Sigmoid colon (tissue), 7 donors: ENCODE measurements at regions of chr16 and their contacts with region 1.

Region 1: GRCh38 chr16:67514382-67514828 is 14.2 kb upstream of the RIPOR1 start:
- DNase-seq: peak; percentile 90
- H3K4me3 ChIP-seq: no peak overlapping the region
- H3K27ac ChIP-seq: no peak overlapping the region
- H3K4me1 ChIP-seq: peaks cover 0 to 13% (median 8%) of the 10 kb centered on the region in 4 donors
- H3K27me3 ChIP-seq: no peaks in the 10 kb centered on the region
- CTCF ChIP-seq: peak; percentile 15 to 68 (median 30)
- EP300 ChIP-seq: no peak
- POLR2A ChIP-seq: no peak

Region 2: GRCh38 chr16:67116388-67117311 is 397.8 kb before region 1 on chr16:
- intact Hi-C with region 1: no loop called
- DNase-seq: peak; percentile 10
- H3K4me3 ChIP-seq: no peak overlapping the region
- H3K27ac ChIP-seq: no peak overlapping the region
- H3K4me1 ChIP-seq: peaks cover 0 to 2% (median under 1%) of the 10 kb centered on the region in 4 donors
- H3K27me3 ChIP-seq: no peaks in the 10 kb centered on the region
- CTCF ChIP-seq: no peak
- EP300 ChIP-seq: no peak
- POLR2A ChIP-seq: no peak

Region 3: DNA sequence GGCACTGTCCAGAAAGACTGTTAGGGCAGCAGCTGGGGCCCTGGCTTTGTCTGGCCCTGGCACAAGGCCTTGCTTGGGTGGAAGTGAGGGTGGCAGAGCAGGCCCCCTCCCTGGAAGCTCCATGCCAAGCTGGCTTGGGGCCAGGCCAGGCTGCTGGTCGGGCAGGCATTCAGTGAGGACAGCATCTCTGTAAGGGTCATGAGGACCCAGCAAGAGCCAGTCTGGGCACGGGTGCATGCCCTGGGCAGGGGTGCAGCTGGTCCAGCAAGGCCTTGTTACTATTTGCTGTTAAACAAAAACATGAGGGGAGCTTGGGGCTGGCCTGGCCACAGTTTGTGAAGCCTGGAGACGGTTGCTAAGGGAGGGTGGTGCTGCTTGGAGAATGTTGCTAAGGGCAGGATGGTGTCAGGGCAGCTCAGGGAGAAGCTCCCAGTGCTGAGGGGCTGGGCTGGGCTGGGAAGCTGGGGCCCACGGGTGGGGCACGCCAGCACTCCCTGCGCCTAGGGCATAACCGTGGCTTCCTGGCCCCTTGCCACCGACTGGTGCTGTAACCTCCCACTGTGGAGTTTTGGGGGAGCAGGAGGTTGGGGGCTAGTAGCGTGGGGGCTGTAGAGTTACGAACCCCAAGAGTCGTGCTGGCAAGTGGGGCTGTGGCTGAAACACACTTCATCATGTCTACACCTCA is 122.9 kb before region 1 on chr16:
- intact Hi-C with region 1: no loop called
- DNase-seq: peak; percentile 78
- H3K4me3 ChIP-seq: peak overlapping the region in 1 of 4 donors; percentile 50
- H3K27ac ChIP-seq: peak overlapping the region; percentile 20 to 82 (median 63)
- H3K4me1 ChIP-seq: peaks cover 0 to 56% (median 50%) of the 10 kb centered on the region in 4 donors
- H3K27me3 ChIP-seq: peaks cover 0 to 59% (median 26%) of the 10 kb centered on the region in 3 donors
- CTCF ChIP-seq: no peak
- EP300 ChIP-seq: no peak
- POLR2A ChIP-seq: no peak

Region 4: DNA sequence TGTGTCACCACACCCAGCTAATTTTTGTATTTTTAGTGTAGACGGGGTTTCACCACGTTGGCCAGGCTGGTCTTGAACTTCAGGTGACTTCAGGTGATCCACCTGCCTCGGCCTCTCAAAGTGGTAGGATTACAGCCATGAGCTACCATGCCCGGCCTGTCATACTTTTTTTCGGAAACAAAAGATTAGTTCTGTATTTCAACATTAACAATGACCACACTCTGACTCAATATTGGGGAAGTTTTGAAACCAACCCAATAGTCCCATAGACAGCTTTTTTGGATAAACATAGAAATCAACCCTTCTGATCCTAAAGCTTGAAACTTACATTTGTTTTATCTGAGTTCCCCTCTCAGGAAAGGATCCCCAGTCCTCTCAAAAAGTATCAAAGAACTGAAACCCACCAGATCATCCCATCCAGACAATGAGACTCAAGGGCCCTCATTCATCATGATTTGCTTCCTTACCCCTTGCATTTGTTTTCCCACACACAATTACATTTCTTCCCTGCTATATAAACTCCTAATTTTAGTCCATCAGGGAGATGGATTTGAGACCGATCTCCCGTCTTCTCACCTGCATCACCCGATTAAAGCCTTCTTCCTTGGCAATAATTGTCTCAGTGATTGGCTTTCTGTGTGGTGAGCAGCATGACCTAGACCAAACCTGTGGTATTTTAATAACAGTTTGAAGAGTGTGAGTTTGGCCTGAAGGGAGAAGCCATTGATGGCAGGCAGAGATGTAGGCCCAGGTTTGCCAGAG is 23.9 kb before region 1 on chr16:
- intact Hi-C with region 1: loop called (anchors 1 kb)
- DNase-seq: no peak
- H3K4me3 ChIP-seq: no peak overlapping the region
- H3K27ac ChIP-seq: peak overlapping the region; percentile 46 to 83 (median 77)
- H3K4me1 ChIP-seq: peaks cover 5 to 40% (median 27%) of the 10 kb centered on the region in 4 donors
- H3K27me3 ChIP-seq: no peaks in the 10 kb centered on the region
- CTCF ChIP-seq: no peak
- EP300 ChIP-seq: no peak
- POLR2A ChIP-seq: no peak